Activated B cell treated with CpG ODN at 0.5 μM for 24 hours (primary cell): ENCODE measurements at regions of chr3 and their contacts with region 1.

Region 1: DNA sequence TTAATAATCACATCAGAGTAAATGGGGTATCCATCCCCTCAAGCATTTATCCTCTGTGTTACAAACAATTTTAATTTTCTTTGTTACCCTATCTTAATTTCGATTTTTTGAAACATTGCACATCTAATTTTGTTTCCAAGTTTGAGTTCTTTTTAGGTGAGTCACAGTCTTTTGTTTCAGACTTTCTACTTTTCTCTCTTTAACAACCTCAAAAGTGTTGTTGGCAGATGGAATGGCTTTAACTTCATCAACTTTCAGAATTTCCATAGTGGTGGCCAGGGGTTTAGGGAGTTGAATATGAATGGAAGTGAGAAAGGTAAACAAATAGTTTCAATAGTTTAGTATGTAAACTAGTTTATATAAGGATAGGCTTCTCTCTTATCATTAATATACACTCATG is 223.0 kb upstream of the MLF1 start:
- DNase-seq: no peak
- ATAC-seq: no peak
- H3K4me3 Mint-ChIP-seq: no peak overlapping the region
- H3K27ac Mint-ChIP-seq: peak overlapping the region; percentile 46
- H3K4me1 Mint-ChIP-seq: peaks cover 10% of the 10 kb centered on the region
- H3K27me3 Mint-ChIP-seq: no peaks in the 10 kb centered on the region
- CTCF ChIP-seq: no peak

Region 2: DNA sequence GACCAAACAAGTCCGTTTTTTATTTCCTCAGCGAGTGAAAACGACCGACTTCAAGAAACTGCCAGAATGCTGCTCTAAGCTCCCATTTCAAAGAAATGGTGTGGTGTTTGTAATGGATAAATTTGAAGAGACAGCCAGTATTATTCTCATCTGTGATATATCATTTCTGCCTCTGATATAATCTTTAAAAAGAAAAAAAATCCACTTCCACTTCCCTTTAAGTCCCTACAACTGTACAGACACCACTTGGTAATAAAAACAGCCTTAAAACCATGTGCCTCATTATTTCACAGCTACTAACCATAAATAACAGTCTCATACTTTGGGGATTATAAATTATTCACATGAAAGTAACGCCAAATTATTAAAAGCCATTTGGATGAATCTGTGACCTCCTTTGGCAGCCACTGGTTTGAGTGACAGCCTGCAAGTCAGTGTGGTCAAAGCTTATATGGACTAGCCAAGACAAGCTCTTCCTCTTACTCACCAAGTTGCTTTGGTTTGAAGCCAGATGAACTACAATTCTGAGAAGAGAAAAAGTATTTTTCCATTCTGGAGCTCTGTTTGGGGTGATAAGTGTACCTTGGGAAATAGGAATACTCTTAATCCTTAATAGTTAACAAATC is 409.7 kb before region 1 on chr3:
- CTCF ChIA-PET with region 1: no interaction called
- POLR2A ChIA-PET with region 1: no interaction called
- intact Hi-C with region 1: no loop called
- DNase-seq: no peak
- ATAC-seq: no peak
- H3K4me3 Mint-ChIP-seq: no peak overlapping the region
- H3K27ac Mint-ChIP-seq: no peak overlapping the region
- H3K4me1 Mint-ChIP-seq: no peaks in the 10 kb centered on the region
- H3K27me3 Mint-ChIP-seq: no peaks in the 10 kb centered on the region
- CTCF ChIP-seq: no peak

Region 3: GRCh38 chr3:158261371-158261979 is 86.5 kb before region 1 on chr3:
- CTCF ChIA-PET with region 1: no interaction called
- POLR2A ChIA-PET with region 1: no interaction called
- intact Hi-C with region 1: no loop called
- DNase-seq: no peak
- ATAC-seq: no peak
- H3K4me3 Mint-ChIP-seq: no peak overlapping the region
- H3K27ac Mint-ChIP-seq: no peak overlapping the region
- H3K4me1 Mint-ChIP-seq: no peaks in the 10 kb centered on the region
- H3K27me3 Mint-ChIP-seq: no peaks in the 10 kb centered on the region
- CTCF ChIP-seq: no peak

Region 4: GRCh38 chr3:158333736-158334135 is 14.2 kb before region 1 on chr3:
- CTCF ChIA-PET with region 1: no interaction called
- POLR2A ChIA-PET with region 1: no interaction called
- intact Hi-C with region 1: loop called (anchors 2 kb)
- DNase-seq: no peak
- ATAC-seq: no peak
- H3K4me3 Mint-ChIP-seq: no peak overlapping the region
- H3K27ac Mint-ChIP-seq: no peak overlapping the region
- H3K4me1 Mint-ChIP-seq: peaks cover 4% of the 10 kb centered on the region
- H3K27me3 Mint-ChIP-seq: no peaks in the 10 kb centered on the region
- CTCF ChIP-seq: no peak